ENCODE measurements at regions of chr17 and their contacts with region 1.

Region 1: GRCh38 chr17:48024937-48025906 is 12.4 kb downstream of the COPZ2 start:
- ATAC-seq: peak; percentile 68 to 83 (median 77)
- H3K4me3 ChIP-seq: peak overlapping the region; percentile 29 to 40 (median 32)
- H3K27ac ChIP-seq: peak overlapping the region; percentile 17 to 25
- H3K4me1 ChIP-seq: peaks cover 24 to 26% of the 10 kb centered on the region in 2 donors

Region 2: DNA sequence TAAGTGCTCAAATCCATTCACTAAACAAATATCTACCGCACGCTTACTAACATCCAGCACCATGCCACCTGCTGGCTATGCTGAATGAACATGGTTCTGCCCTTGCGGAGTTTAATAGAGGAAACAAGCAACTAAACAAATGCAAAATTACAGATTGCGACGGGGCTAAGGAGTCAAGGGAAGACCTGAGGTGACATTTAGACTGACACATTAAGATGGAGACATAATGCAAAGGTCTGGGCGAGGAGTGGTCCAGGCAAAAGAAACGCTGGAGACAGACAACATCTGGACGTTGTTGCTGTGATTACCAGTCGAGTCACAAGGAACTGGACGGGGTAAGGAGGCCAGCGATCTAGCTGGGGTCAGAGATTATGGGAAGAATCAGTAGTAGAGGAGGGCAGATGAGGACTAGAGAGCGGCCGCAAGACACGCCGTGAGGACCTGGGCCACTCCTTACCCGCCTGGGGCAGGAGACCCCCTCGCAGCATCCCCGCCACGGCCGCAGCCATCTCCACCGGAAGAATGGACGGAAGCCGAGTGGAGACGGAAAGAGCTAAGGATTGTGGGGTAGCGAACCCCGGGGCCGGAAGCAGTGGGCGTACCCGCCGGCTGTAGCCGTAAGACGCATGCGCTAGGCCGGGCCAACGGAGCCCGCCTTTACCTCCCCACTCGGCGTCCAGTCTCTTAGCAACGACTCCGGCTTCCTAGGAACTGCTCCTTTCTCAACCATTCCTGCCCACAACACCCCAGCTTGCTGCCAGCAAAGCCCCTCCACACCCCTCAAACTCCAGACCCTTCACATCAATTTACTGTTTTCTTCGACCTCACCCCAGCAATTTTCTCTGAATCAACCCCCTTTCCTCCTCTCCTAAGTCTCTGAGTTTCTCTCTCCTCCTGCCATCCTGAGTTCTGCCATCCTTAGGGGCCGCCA is 194.0 kb before region 1 on chr17 and contains the starts of genes LRRC46 and MRPL10:
- in situ Hi-C with region 1: loop called in 1 of 9 experiments (anchors 25 kb)
- ATAC-seq: peak; percentile 91 to 97 (median 95)
- H3K4me3 ChIP-seq: peak within 1 kb of the TSS; percentile 62 to 97 (median 79)
- H3K27ac ChIP-seq: peak within 1 kb of the TSS; percentile 82 to 88
- H3K4me1 ChIP-seq: peaks cover 11% of the 10 kb centered on the region in 2 donors
- total RNA-seq, gene LRRC46: 0.27 to 5.2 (median 1.2) TPM
- total RNA-seq, gene MRPL10: 41.5 to 58.3 (median 46.3) TPM

Region 3: GRCh38 chr17:48131216-48131824 is 106.1 kb after region 1 on chr17:
- in situ Hi-C with region 1: loop called in 1 of 9 experiments (anchors 25 kb)
- ATAC-seq: peak; percentile 80 to 97 (median 92)
- H3K4me3 ChIP-seq: no peak overlapping the region
- H3K27ac ChIP-seq: no peak overlapping the region
- H3K4me1 ChIP-seq: peaks cover 0 to 4% of the 10 kb centered on the region in 2 donors

Region 4: GRCh38 chr17:48492401-48493298 is 467.4 kb after region 1 on chr17:
- in situ Hi-C with region 1: no loop called
- ATAC-seq: peak; percentile 91 to 99 (median 96)
- H3K4me3 ChIP-seq: peak overlapping the region; percentile 12 to 28 (median 21)
- H3K27ac ChIP-seq: peak overlapping the region; percentile 67 to 72
- H3K4me1 ChIP-seq: peaks cover 23 to 26% of the 10 kb centered on the region in 2 donors